Activated CD4-positive, alpha-beta T cell treated with anti-CD3 and anti-CD28 coated beads, Interleukin-2, amount 10 ng/mL, durations not matched to agents 24 days and 14 days (primary cell): ENCODE measurements at regions of chr7 and their contacts with region 1.

Region 1: DNA sequence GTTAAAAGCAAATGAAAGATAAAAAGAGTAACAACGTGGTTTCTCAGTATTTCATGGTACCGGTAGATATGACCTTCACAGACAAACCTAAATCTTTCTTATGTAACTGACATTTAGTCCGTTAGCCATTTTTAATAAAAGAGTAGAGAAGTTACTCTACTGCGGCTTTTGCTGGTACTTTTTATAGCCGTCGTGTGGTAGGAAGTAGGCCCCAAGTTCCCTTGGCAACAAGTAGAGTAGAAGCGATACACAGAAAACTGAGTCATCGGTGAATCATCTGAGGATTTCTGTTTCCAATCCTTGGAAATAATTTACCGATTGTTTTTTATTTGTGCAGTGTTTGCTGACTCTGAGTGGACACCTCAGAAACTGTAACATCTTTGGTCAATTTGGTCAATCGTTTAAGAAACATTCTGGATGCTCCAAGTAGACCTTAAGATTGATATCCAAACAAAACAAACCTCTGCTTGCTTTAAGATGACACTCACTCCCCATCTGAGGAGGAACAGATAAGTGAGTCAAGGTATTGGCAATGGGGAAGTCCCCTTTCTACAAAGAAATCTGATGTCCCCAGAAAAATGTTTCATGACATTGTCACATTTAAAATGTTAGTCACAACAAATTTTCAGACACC is 63.9 kb upstream of the AHR start:
- DNase-seq: peak; percentile 91
- H3K4me3 Mint-ChIP-seq: peak overlapping the region; percentile 81
- H3K27ac Mint-ChIP-seq: peak overlapping the region; percentile 97
- H3K4me1 Mint-ChIP-seq: peaks cover 35% of the 10 kb centered on the region
- H3K27me3 Mint-ChIP-seq: no peaks in the 10 kb centered on the region

Region 2: DNA sequence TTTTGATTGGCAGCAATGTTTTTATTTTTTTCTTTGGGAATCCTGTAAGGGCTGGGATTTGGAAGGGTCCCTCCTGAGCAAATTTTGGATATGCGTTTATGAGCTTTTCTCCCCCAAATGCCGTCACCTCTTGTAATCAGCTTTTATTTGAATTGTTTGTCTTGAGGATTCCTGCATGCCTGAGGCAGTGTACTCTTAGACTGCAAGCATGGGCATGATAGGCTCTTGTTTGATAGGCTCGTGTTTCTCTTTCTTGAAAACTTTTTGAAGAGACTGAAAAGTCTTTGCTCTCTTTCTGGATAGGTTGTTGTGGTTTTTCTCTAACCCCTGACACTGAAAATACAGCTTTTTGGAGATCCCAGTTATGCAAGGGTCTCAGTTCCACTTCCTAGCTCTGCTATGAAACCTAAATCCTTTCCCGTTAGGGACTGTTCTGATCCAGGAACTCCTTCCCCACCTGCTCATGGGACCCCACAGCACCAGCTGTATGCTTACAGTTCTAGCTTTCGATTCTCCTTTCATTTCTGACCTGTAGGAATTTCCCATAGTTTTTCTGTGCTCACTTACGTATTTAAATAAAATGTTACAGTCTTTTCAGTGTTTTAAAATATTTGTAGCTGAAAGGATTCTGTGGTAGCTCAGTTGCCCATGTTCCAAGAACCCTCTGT is 463.7 kb before region 1 on chr7:
- intact Hi-C with region 1: no loop called
- DNase-seq: no peak
- H3K4me3 Mint-ChIP-seq: no peak overlapping the region
- H3K27ac Mint-ChIP-seq: no peak overlapping the region
- H3K4me1 Mint-ChIP-seq: no peaks in the 10 kb centered on the region
- H3K27me3 Mint-ChIP-seq: peaks cover 18% of the 10 kb centered on the region

Region 3: GRCh38 chr7:16933296-16934279 is 300.9 kb before region 1 on chr7:
- intact Hi-C with region 1: loop called (anchors 1 kb)
- DNase-seq: peak; percentile 74
- H3K4me3 Mint-ChIP-seq: peak overlapping the region; percentile 32
- H3K27ac Mint-ChIP-seq: peak overlapping the region; percentile 68
- H3K4me1 Mint-ChIP-seq: peaks cover 51% of the 10 kb centered on the region
- H3K27me3 Mint-ChIP-seq: no peaks in the 10 kb centered on the region

Region 4: DNA sequence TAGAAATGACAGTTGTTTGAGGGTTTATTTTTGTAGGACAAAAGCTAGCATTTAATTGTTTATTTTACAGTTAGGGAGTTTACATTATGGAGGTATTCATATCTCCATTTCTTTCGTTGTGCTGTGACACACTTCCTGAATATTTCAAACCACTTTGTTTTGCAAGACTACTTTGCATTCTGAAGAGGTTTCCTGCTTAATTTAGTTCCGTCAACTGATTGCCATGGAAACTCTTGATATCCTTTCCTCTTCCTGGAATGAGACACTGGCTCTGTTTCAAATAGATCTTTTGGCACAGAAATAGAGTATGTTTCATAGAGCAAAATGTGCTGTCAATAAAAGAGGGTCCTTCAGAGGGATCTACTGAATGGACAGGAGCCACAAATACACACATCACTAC is 193.2 kb before region 1 on chr7:
- intact Hi-C with region 1: loop called (anchors 10 kb)
- DNase-seq: no peak
- H3K4me3 Mint-ChIP-seq: no peak overlapping the region
- H3K27ac Mint-ChIP-seq: peak overlapping the region; percentile 54
- H3K4me1 Mint-ChIP-seq: peaks cover 26% of the 10 kb centered on the region
- H3K27me3 Mint-ChIP-seq: peaks cover 12% of the 10 kb centered on the region

Region 5: DNA sequence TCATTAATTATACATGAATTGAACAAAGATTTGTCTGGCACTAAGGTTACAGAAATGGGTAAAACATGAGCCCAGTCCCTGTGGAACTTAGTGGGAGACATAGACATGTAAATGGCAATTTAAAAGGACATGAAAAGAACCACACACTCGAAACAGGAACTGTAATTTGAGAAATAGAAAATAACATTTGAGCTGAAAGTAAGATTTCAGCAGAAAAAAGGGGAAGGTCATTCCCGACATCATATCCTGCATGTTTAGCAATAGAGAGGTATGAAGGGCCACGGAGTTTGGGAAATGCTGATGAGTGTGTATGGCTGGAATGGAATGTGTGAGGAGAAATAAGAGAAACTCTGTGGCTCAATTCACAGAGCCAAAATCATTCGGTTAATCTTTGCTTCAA is 111.5 kb before region 1 on chr7:
- intact Hi-C with region 1: no loop called
- DNase-seq: no peak
- H3K4me3 Mint-ChIP-seq: no peak overlapping the region
- H3K27ac Mint-ChIP-seq: no peak overlapping the region
- H3K4me1 Mint-ChIP-seq: peaks cover 10% of the 10 kb centered on the region
- H3K27me3 Mint-ChIP-seq: no peaks in the 10 kb centered on the region

Region 6: DNA sequence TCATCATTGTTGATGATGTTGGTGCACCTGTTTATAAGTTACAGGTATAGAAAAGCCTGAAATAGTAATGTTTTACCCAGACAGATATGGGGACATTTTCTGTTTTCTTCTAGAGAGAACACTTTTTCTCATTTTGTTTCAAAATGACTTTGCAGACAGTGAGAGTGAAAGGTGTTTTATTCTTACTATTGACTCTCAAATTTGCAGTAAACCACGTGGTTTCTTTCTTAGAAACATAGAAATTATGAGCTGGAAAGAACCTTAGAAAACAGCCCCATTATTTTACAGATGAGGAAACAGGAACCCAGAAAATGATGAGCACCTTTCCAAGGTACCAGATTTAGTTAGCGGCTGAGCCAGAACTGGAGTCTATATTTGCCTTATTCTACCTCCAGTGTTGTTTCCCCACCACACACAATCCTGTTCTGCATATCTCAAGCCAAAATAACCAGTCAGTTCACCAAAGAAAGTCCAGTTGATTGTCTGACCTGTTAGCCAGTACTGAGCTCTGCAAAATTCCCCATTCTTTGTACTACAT is 74.9 kb before region 1 on chr7:
- intact Hi-C with region 1: loop called (anchors 1 kb)
- DNase-seq: peak; percentile 66
- H3K4me3 Mint-ChIP-seq: peak overlapping the region; percentile 2
- H3K27ac Mint-ChIP-seq: peak overlapping the region; percentile 78
- H3K4me1 Mint-ChIP-seq: peaks cover 37% of the 10 kb centered on the region
- H3K27me3 Mint-ChIP-seq: peaks cover 13% of the 10 kb centered on the region

Region 7: GRCh38 chr7:17274551-17275245 is 40.2 kb after region 1 on chr7:
- intact Hi-C with region 1: loop called (anchors 1 kb)
- DNase-seq: peak; percentile 57
- H3K4me3 Mint-ChIP-seq: no peak overlapping the region
- H3K27ac Mint-ChIP-seq: no peak overlapping the region
- H3K4me1 Mint-ChIP-seq: peaks cover 11% of the 10 kb centered on the region
- H3K27me3 Mint-ChIP-seq: no peaks in the 10 kb centered on the region

Region 8: GRCh38 chr7:17940302-17940883 is 705.9 kb after region 1 on chr7 and contains the start of gene SNX13:
- intact Hi-C with region 1: loop called (anchors 10 kb)
- DNase-seq: peak; percentile 96
- H3K4me3 Mint-ChIP-seq: peak within 1 kb of the TSS; percentile 99
- H3K27ac Mint-ChIP-seq: peak within 1 kb of the TSS; percentile 93
- H3K4me1 Mint-ChIP-seq: peaks cover 32% of the 10 kb centered on the region
- H3K27me3 Mint-ChIP-seq: peaks cover 17% of the 10 kb centered on the region
- total RNA-seq, gene SNX13: 18.1 and 23.7 TPM in 2 replicates